MCF 10A (cell line): ENCODE measurements at regions of chr7 and their contacts with region 1.

Region 1: GRCh38 chr7:2555121-2556052 is at the start of gene BRAT1:
- DNase-seq: peak; percentile 88
- H3K4me3 Mint-ChIP-seq: peak within 1 kb of the TSS; percentile 80
- H3K27ac Mint-ChIP-seq: peak within 1 kb of the TSS; percentile 94
- H3K4me1 Mint-ChIP-seq: peaks cover 11% of the 10 kb centered on the region
- H3K27me3 Mint-ChIP-seq: no peaks in the 10 kb centered on the region
- CTCF ChIP-seq: peak; percentile 58
- total RNA-seq, gene BRAT1: 15.4 and 18.0 TPM in 2 replicates

Region 2: DNA sequence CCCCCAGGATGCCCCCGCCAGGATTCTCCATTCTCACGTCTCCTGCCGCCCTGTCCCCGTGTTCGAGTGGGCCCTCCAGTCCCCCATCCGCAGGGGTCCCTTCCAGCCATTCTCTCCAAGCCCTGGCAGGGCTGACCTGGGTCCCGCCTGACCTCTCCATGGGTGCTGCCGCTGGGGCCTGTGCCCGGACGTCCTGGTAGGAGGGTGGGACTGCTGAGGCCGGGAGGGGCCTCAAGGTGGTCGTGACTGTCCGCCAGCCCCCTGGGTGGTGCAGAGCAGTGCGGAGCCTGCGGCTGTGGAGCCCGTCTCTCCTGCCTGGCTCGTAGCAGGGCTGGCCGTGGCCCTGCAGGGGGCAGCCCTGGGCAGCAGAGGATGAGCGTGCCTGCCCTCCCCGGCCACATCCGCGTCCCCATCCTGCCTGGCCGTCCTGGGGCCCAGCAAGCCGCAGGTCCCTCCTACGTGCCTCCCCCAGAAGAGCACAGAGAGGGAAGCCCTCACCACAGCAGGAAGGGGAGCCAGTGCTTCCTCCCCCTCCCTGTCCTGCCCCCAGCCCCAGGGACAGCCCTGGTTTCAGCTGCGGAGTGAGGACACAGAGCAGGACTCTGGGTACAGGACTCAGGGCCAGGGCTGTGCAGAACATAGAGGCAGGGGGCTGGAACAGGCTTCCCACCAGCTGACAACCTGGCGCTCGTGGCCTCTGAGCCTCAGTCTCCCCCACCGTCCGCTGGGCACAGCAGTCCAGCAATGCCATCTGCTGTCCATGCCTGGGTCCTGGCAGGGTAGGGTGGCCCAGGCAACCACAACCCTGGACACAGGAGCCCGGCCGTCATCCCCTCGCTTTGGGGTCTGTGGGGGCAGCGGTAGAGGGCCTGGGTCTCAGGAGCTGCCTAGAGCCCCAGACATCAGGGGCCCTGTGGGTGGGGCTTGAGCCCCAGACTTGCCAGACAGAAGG is 77.7 kb before region 1 on chr7:
- CTCF ChIA-PET with region 1: no interaction called
- POLR2A ChIA-PET with region 1: interaction called, 3 read pairs
- intact Hi-C with region 1: loop called (anchors 5 kb)
- DNase-seq: peak; percentile 61
- H3K4me3 Mint-ChIP-seq: no peak overlapping the region
- H3K27ac Mint-ChIP-seq: peak overlapping the region; percentile 27
- H3K4me1 Mint-ChIP-seq: no peaks in the 10 kb centered on the region
- H3K27me3 Mint-ChIP-seq: no peaks in the 10 kb centered on the region
- CTCF ChIP-seq: peak; percentile 78

Region 3: GRCh38 chr7:2523941-2524807 is 31.2 kb before region 1 on chr7:
- CTCF ChIA-PET with region 1: interaction called, 3 read pairs
- POLR2A ChIA-PET with region 1: interaction called, 15 read pairs
- intact Hi-C with region 1: loop called (anchors 5 kb)
- DNase-seq: peak; percentile 75
- H3K4me3 Mint-ChIP-seq: peak overlapping the region; percentile 70
- H3K27ac Mint-ChIP-seq: peak overlapping the region; percentile 82
- H3K4me1 Mint-ChIP-seq: peaks cover 27% of the 10 kb centered on the region
- H3K27me3 Mint-ChIP-seq: no peaks in the 10 kb centered on the region
- CTCF ChIP-seq: no peak

Region 4: GRCh38 chr7:2632733-2633537 is 77.5 kb after region 1 on chr7:
- CTCF ChIA-PET with region 1: no interaction called
- POLR2A ChIA-PET with region 1: interaction called, 3 read pairs
- intact Hi-C with region 1: loop called (anchors 5 kb)
- DNase-seq: peak; percentile 58
- H3K4me3 Mint-ChIP-seq: peak overlapping the region; percentile 93
- H3K27ac Mint-ChIP-seq: peak overlapping the region; percentile 85
- H3K4me1 Mint-ChIP-seq: peaks cover 11% of the 10 kb centered on the region
- H3K27me3 Mint-ChIP-seq: no peaks in the 10 kb centered on the region
- CTCF ChIP-seq: no peak

Region 5: GRCh38 chr7:2680792-2681490 is 125.6 kb after region 1 on chr7:
- CTCF ChIA-PET with region 1: no interaction called
- POLR2A ChIA-PET with region 1: no interaction called
- intact Hi-C with region 1: loop called (anchors 2 kb)
- DNase-seq: peak; percentile 77
- H3K4me3 Mint-ChIP-seq: no peak overlapping the region
- H3K27ac Mint-ChIP-seq: no peak overlapping the region
- H3K4me1 Mint-ChIP-seq: no peaks in the 10 kb centered on the region
- H3K27me3 Mint-ChIP-seq: peaks cover 41% of the 10 kb centered on the region
- CTCF ChIP-seq: peak; percentile 69

Region 6: GRCh38 chr7:3294432-3295100 is 739.2 kb after region 1 on chr7:
- CTCF ChIA-PET with region 1: no interaction called
- POLR2A ChIA-PET with region 1: no interaction called
- intact Hi-C with region 1: no loop called
- DNase-seq: peak; percentile 38
- H3K4me3 Mint-ChIP-seq: no peak overlapping the region
- H3K27ac Mint-ChIP-seq: no peak overlapping the region
- H3K4me1 Mint-ChIP-seq: no peaks in the 10 kb centered on the region
- H3K27me3 Mint-ChIP-seq: no peaks in the 10 kb centered on the region
- CTCF ChIP-seq: no peak